ENCODE measurements at regions of chr2 and their contacts with region 1.

Region 1: GRCh38 chr2:64128943-64129391 is 15.3 kb downstream of the PELI1 start:
- DNase-seq: no peak
- H3K4me3 Mint-ChIP-seq: no peak overlapping the region
- H3K27ac Mint-ChIP-seq: peak overlapping the region; percentile 32
- H3K4me1 Mint-ChIP-seq: peaks cover 54% of the 10 kb centered on the region
- H3K27me3 Mint-ChIP-seq: no peaks in the 10 kb centered on the region
- CTCF ChIP-seq: no peak

Region 2: GRCh38 chr2:64538764-64539433 is 409.9 kb after region 1 on chr2:
- CTCF ChIA-PET with region 1: no interaction called
- intact Hi-C with region 1: loop called (anchors 10 kb)
- DNase-seq: no peak
- H3K4me3 Mint-ChIP-seq: no peak overlapping the region
- H3K27ac Mint-ChIP-seq: no peak overlapping the region
- H3K4me1 Mint-ChIP-seq: peaks cover 41% of the 10 kb centered on the region
- H3K27me3 Mint-ChIP-seq: no peaks in the 10 kb centered on the region
- CTCF ChIP-seq: no peak

Measured in Calu3 (cell line).